Mammary epithelial cell (primary cell): ENCODE measurements at regions of chr1 and their contacts with region 1.

Region 1: DNA sequence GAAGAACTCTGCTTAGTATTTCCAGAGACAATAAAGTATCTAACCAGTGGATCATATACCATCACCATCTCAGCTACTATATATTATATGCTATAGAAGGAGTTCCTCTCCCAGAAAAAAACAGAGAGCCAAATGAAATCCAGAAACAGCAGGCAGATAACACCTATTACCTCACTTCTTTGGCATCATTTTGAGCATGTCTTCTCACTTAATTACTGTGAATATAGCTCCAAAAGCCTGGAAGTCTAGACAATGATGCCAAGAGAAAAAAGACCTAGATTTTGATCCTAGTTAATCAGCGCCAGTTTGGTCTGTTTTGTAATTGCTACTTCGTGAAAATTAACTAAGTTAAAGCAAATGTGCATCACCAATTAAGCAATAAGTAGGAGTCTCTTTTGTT is 131.3 kb downstream of the EIF4G3 start:
- DNase-seq: no peak
- H3K4me3 ChIP-seq: no peak overlapping the region
- H3K27ac ChIP-seq: no peak overlapping the region
- H3K4me1 ChIP-seq: no peaks in the 10 kb centered on the region
- H3K27me3 ChIP-seq: no peaks in the 10 kb centered on the region
- CTCF ChIP-seq: no peak

Region 2: GRCh38 chr1:21082073-21082472 is 36.7 kb after region 1 on chr1:
- CTCF ChIA-PET with region 1: no interaction called
- dilution Hi-C with region 1: loop called (anchors 5 kb)
- in situ Hi-C with region 1: no loop called
- intact Hi-C with region 1: no loop called
- DNase-seq: no peak
- H3K4me3 ChIP-seq: no peak overlapping the region
- H3K27ac ChIP-seq: no peak overlapping the region
- H3K4me1 ChIP-seq: no peaks in the 10 kb centered on the region
- H3K27me3 ChIP-seq: no peaks in the 10 kb centered on the region
- CTCF ChIP-seq: no peak